ENCODE measurements at regions of chr6 and their contacts with region 1.

Region 1: DNA sequence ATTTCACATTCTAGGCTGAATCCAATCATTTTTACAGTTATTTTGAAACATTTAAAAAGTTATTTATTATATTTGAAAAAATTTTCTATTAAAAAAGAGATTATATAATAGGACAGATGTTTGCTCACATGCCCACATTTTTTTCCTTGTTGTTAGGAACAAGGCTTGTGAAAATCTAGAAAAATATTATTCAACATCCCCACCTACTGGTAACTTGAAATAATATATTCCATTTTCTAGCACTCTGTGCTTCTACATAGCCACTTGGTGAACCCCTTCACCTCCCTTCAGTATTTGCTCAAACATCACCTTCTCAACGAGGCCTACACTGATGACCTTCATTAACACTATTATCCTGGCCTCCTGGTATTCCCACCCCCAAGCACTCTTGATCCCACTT is 18.3 kb upstream of the GPRC6A start:
- DNase-seq: peak; percentile 50
- H3K4me3 ChIP-seq: no peak overlapping the region
- H3K27ac ChIP-seq: no peak overlapping the region
- H3K4me1 ChIP-seq: no peaks in the 10 kb centered on the region
- H3K27me3 ChIP-seq: peaks cover 4% of the 10 kb centered on the region
- CTCF ChIP-seq: peak; percentile 42; the same call in 1 of the 2 replicates

Region 2: DNA sequence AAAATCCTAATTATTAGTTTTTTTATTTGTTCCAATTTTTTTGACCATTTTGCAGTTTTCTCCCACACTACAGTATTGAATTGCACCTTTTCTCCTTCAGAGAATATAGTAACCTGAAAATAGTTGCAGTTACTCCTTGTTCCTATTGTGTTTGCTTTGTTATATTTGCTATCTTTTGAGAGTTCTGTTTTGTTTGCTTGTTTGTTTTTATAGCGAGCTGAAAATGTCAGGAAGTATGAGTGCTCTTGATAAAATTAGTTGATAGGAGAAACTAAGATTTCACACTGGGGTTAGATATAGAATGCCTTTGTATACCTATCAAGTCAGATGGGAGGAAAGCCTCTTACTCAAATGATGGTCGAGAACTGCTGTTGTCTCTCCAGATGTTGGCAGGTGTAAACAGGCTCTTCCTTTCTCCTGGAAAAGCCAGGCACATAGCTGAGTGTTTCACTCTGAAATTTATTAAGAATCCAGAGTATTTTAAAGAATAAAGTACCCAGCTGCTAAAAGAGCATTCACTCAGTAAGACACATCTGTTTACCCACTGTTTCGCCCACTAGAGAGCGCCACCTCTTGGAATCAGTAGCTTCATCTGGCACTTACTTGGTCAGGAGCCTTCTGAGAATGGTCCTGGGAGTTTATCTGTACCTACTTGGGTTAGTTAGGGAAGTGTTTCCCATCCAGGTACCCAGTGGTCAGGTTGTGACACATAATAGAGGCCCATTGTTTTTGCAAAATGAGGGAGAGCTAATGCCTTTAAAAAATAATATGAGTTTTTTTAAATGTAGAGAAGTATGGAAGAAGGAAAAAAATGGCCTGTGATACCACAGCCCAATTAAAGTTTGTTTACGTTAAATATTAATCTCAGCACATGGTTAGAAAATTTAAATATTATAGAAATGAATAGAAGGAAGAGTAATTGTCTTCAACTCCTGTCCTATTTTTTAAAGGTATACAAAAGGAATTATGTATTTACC is 735.4 kb before region 1 on chr6:
- CTCF ChIA-PET with region 1: no interaction called
- POLR2A ChIA-PET with region 1: no interaction called
- intact Hi-C with region 1: loop called (anchors 10 kb)
- DNase-seq: peak; percentile 76
- H3K4me3 ChIP-seq: no peak overlapping the region
- H3K27ac ChIP-seq: no peak overlapping the region
- H3K4me1 ChIP-seq: no peaks in the 10 kb centered on the region
- H3K27me3 ChIP-seq: no peaks in the 10 kb centered on the region
- CTCF ChIP-seq: peak; percentile 86

Region 3: GRCh38 chr6:116217069-116217468 is 630.2 kb before region 1 on chr6:
- CTCF ChIA-PET with region 1: no interaction called
- POLR2A ChIA-PET with region 1: no interaction called
- intact Hi-C with region 1: loop called (anchors 10 kb)
- DNase-seq: peak; percentile 64
- H3K4me3 ChIP-seq: no peak overlapping the region
- H3K27ac ChIP-seq: peak overlapping the region; percentile 37
- H3K4me1 ChIP-seq: peaks cover 16% of the 10 kb centered on the region
- H3K27me3 ChIP-seq: no peaks in the 10 kb centered on the region
- CTCF ChIP-seq: peak; percentile 73

Region 4: DNA sequence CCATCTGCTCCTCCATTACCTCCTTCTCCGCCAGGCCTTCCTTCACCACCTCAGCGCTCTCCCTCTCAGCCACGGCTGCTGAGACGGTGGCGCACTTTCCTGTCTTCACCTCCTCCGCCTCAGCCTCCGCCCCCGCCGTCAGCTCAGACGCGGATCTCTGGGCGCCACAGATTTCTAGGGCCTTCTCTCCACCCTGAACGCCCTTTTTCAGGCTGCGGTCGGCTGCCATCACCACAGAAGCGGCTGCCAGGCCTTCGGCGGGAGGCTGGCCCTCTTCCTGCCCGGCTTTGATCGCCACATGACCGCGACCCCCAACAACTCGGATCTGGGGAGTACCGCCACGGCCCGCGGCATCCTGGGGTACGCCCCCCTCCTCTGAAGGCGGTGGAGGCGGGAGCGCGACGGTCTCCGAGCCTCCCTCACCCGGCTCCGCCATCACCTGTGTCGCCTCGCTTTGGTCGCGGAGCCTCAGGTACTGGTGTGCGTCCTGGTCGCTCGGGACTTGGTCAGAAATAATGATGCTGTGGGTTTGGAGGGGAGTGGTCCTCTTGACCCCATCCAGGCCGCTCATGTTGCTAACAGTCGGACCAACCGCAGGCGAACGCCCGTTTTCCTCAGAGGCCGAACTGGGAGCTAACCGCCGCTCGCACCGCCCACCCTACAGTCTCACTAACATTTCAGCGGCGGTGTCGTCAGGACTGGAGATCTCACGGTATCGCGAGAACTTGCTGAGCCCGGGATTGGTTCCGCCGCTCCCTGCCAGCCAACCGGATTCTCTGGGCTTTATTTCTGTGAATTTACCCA is 567.8 kb before region 1 on chr6 and contains the start of gene TSPYL1:
- CTCF ChIA-PET with region 1: no interaction called
- POLR2A ChIA-PET with region 1: no interaction called
- intact Hi-C with region 1: loop called (anchors 10 kb)
- DNase-seq: peak; percentile 97
- H3K4me3 ChIP-seq: peak within 1 kb of the TSS; percentile 94
- H3K27ac ChIP-seq: peak within 1 kb of the TSS; percentile 92
- H3K4me1 ChIP-seq: peaks cover 33% of the 10 kb centered on the region
- H3K27me3 ChIP-seq: no peaks in the 10 kb centered on the region
- CTCF ChIP-seq: 0 out of 2 replicates have a peak, but pooled peaks have one; percentile 18
- total RNA-seq, gene TSPYL1: 39.7 and 41.1 TPM in 2 replicates

Region 5: DNA sequence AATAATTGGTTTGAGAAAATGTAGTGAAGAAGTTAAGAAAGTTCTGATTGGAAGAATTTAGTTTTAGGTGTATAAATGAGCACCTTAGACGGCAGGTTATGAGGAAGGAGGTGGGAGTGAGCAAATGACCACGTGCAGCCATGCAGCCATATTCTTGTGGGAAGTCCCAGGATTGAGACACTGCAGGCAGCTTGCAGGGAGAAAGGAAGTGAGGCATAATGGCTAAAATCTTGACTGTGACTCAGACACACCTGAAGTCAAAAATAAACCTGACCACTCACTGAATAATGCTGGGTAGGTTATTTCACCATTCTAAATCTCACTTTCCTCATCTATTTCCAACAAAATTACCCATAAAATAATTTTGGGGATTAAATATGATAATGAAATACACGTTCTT is 459.9 kb before region 1 on chr6:
- CTCF ChIA-PET with region 1: no interaction called
- POLR2A ChIA-PET with region 1: no interaction called
- intact Hi-C with region 1: no loop called
- DNase-seq: no peak
- H3K4me3 ChIP-seq: no peak overlapping the region
- H3K27ac ChIP-seq: no peak overlapping the region
- H3K4me1 ChIP-seq: peaks cover 22% of the 10 kb centered on the region
- H3K27me3 ChIP-seq: no peaks in the 10 kb centered on the region
- CTCF ChIP-seq: no peak

Region 6: GRCh38 chr6:116542426-116542825 is 304.8 kb before region 1 on chr6:
- CTCF ChIA-PET with region 1: no interaction called
- POLR2A ChIA-PET with region 1: no interaction called
- intact Hi-C with region 1: loop called (anchors 10 kb)
- DNase-seq: no peak
- H3K4me3 ChIP-seq: no peak overlapping the region
- H3K27ac ChIP-seq: no peak overlapping the region
- H3K4me1 ChIP-seq: no peaks in the 10 kb centered on the region
- H3K27me3 ChIP-seq: peaks cover 6% of the 10 kb centered on the region
- CTCF ChIP-seq: no peak

Region 7: DNA sequence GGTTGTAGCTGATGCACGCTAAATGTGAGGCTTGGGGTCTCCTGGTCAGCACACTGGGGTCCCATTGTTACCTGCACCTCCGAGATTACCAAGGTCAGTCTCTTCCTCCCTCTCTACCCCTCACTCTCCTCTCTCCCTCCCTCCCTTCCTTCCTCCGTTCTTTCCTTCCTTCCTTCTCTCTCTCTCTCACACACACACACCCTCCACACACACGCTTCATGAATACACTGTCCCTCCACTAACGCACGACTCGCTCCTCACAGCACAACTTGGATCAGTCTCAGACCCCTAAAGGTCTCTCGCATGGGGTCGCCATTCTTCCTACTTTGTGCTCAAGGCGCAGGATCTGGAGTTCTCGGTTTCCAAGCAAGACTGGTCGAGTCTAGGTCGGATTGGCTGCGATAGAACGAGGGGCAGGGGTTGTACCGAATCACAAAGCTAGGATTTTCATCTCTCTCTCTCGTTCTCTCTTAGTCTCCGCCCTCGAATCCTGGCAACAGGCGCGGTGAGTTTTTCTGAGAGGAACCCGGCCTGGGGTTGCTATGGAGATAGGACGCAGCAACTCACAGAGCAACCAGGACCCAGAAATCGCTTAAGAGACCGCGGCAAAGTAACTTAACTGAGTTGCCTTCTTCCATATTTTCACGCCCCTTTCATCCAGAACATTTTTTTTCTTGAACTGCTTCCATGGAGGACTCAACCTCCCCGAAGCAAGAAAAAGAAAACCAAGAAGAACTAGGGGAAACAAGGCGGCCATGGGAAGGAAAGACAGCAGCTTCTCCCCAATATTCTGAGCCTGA is 231.1 kb before region 1 on chr6 and contains the start of gene RSPH4A:
- CTCF ChIA-PET with region 1: no interaction called
- POLR2A ChIA-PET with region 1: no interaction called
- intact Hi-C with region 1: loop called (anchors 10 kb)
- DNase-seq: peak; percentile 97
- H3K4me3 ChIP-seq: peak within 1 kb of the TSS; percentile 52
- H3K27ac ChIP-seq: no peak within 1 kb of the TSS
- H3K4me1 ChIP-seq: no peaks in the 10 kb centered on the region
- H3K27me3 ChIP-seq: peaks cover 9% of the 10 kb centered on the region
- CTCF ChIP-seq: peak; percentile 50
- total RNA-seq, gene RSPH4A: 0.24 and 0.26 TPM in 2 replicates

Region 8: GRCh38 chr6:116779573-116780164 is 67.6 kb before region 1 on chr6:
- CTCF ChIA-PET with region 1: interaction called, 5 read pairs
- POLR2A ChIA-PET with region 1: no interaction called
- intact Hi-C with region 1: loop called (anchors 1 kb)
- DNase-seq: peak; percentile 66
- H3K4me3 ChIP-seq: peak overlapping the region; percentile 5
- H3K27ac ChIP-seq: no peak overlapping the region
- H3K4me1 ChIP-seq: no peaks in the 10 kb centered on the region
- H3K27me3 ChIP-seq: no peaks in the 10 kb centered on the region
- CTCF ChIP-seq: peak; percentile 71

Measured in A673 (cell line).